ENCODE measurements at regions of chr6 and their contacts with region 1.

Region 1: DNA sequence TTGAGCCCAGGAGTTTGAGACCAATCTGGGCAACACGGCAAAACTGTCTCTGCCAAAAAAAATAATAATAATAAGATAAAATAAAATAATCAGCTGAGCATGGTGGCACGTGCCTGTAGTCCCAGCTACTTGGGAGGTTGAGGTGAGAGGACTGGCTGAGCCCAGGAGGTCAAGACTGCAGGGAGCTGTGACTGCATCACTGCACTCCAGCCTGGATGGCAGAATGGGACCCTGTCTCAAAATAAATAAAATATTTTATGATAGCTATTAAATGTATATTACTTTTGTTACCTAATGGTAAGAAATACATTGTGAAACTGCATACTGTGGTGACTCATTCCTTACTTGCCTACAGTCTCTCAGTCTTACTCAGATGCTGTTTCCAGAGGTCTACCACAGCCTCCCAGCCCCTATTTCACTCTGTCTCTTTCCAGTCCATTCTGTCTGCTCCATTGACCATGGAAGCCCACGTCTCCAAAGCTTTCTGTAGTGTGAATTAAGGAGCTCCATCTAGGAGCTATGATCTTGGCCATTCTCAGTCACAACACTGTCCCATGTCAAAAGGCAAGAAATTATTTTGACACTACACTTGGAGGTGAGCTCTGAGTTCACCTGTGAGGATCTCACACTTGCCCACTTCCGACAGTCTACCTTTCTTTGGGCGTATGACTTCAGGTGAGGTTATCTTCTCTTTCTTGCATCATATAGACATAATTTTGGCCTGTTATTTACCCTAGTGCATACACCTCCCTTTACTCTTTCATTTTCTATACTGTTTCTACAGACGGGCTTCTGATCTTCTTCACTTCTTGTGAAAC is 22.4 kb upstream of the SNX9 start:
- DNase-seq: peak; percentile 29
- H3K4me3 Mint-ChIP-seq: peak overlapping the region; percentile 45
- H3K27ac Mint-ChIP-seq: peak overlapping the region; percentile 84
- H3K4me1 Mint-ChIP-seq: peaks cover 62% of the 10 kb centered on the region
- H3K27me3 Mint-ChIP-seq: peaks cover 34% of the 10 kb centered on the region

Region 2: GRCh38 chr6:157726892-157727628 is 73.6 kb before region 1 on chr6:
- intact Hi-C with region 1: no loop called
- DNase-seq: no peak
- H3K4me3 Mint-ChIP-seq: no peak overlapping the region
- H3K27ac Mint-ChIP-seq: no peak overlapping the region
- H3K4me1 Mint-ChIP-seq: no peaks in the 10 kb centered on the region
- H3K27me3 Mint-ChIP-seq: peaks cover 22% of the 10 kb centered on the region

Region 3: DNA sequence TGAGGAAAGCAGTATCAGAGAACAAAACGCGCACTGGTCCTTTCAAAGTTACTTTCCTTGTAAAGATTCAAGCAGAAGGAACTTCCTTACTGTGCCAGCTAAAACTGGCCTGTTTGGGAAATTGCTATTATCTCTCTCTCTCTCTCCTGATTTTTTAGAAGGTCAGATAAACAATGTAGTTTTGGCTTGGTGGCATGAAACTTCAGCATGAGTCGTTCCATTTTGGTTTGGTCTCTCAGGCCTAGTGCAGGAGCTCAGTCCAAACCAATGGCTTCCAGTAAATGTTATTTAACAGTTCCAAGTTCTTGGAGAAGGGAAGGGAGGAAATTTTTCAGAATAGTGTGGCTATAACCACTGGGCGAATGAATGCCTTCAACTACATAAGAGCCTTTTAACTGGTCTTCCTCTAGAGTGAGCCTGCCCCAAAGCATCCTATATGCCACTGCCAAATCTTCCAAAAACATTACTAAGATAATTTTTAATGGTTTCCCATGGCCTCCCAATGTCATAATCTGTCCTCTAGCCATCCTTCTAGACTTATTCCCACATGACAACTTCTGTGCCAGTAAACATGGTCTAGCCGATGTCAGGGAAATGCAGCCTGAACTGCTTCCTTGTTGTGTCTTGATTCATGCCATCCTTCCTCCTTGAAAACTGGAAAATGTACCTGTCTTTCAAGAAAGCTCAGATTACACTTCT is 13.3 kb after region 1 on chr6:
- intact Hi-C with region 1: loop called (anchors 1 kb)
- DNase-seq: no peak
- H3K4me3 Mint-ChIP-seq: no peak overlapping the region
- H3K27ac Mint-ChIP-seq: peak overlapping the region; percentile 12
- H3K4me1 Mint-ChIP-seq: peaks cover 61% of the 10 kb centered on the region
- H3K27me3 Mint-ChIP-seq: peaks cover 30% of the 10 kb centered on the region

Region 4: DNA sequence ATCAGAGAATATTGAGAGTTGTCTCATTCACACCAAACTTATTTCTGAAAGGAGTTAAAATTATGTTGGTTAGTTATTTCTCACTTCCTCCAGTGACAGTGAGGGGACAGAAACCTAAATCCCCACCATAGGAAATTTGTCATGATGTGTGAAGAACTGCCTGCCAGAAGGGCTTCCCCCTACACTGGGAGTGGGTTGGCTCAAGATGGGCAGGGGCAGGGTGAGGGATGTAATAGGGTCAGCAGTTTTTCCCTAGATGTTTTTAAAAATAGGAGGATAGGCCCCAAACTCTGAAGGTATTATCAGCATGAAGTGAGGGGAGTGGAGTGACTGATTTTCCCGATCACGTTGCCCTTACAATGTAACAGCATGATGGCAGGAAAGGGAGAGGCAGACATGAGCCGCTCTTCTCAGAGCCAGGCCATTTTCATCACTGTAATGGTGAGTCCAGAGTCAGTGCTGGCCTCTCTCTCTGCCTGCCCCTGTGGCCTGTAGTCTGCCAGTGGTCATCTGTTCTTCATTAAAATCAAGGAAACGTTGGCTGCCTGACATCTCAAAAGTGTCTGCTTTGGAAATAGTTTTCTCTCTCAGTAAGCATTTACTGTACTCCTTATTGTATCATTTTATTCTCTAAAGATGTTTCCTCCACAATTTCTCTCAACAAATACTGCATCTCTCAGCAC is 121.2 kb after region 1 on chr6:
- intact Hi-C with region 1: no loop called
- DNase-seq: no peak
- H3K4me3 Mint-ChIP-seq: no peak overlapping the region
- H3K27ac Mint-ChIP-seq: no peak overlapping the region
- H3K4me1 Mint-ChIP-seq: no peaks in the 10 kb centered on the region
- H3K27me3 Mint-ChIP-seq: no peaks in the 10 kb centered on the region

Measured in activated T-helper 1 cell treated with anti-CD3 and anti-CD28 coated beads, Interleukin-12 subunit alpha, Interleukin-12 subunit beta, Interleukin-2, Interleukin-4 antibody, amounts not matched to agents 30 ng/mL and 10 ng/mL and 1 ng/mL, durations not matched to agents 14 hours and 24 hours and 36 hours (primary cell).